GM13976 (cell line): ENCODE measurements at regions of chr22 and their contacts with region 1.

Region 1: DNA sequence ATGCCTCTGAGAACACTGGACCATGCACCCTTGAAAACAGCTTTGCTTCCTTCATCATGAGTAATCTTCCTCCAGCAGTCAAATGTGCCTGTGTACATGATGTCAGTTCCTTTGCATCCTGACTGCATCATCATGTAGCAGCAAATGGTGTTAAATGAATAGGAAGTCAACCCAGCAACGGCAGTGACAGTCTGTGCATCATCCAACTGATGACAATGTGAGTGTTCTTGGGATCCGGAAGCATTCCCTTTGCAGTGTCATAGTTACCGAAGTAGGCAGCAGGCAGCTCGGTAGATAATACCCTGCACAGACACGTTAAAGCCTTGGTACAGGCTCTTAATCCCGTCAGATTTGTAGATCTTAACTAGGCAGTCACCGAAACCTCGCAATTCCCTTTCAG is 2.5 kb downstream of the WBP2NL start:
- DNase-seq: no peak
- CTCF ChIP-seq: no peak

Region 2: GRCh38 chr22:41078931-41079330 is 922.2 kb before region 1 on chr22:
- in situ Hi-C with region 1: no loop called
- DNase-seq: no peak
- CTCF ChIP-seq: no peak

Region 3: DNA sequence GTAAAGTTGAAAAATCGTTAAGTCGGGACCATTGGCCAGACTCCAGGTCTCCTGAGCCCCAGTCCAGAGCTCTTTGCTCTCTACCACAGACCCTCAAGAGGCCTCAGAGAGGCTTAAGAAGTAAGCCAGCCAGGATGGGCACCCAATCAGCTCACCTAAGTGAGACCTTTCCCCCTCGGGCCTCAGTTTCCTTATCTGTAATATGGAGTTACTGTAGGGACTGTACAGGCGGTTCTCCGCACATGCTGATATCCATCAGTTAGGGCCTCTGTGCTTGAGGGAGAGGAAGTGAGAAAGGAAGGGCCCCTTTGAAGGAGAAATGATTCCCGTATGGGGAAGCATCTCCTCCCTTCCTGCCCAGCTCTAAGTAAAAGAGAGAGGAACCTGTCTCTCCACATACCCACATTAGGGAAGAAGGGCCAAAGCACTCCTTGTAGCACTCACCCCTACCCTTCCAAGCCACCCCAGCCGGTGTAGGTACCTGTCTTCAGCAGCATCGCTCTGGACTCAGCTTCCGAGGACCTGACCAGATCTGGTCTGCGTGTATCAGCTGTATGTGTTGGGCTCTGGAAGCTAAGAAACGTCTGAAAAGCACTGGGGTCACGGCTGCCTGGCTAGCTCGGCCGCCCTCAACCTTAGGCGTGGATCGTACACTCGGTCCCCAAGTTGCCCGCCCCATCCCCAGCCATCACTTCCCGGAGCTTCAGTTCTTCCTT is 68.8 kb after region 1 on chr22:
- in situ Hi-C with region 1: loop called (anchors 10 kb)
- DNase-seq: peak; percentile 50
- CTCF ChIP-seq: no peak